PC-3 (cell line): ENCODE measurements at regions of chr19 and their contacts with region 1.

Region 1: GRCh38 chr19:5775668-5776309 is 8.8 kb downstream of the PRR22 start:
- DNase-seq: peak; percentile 93
- ATAC-seq: peak; percentile 37; the same call in 1 of the 2 replicates
- H3K4me3 ChIP-seq: no peak overlapping the region
- H3K27ac ChIP-seq: no peak overlapping the region
- H3K4me1 ChIP-seq: no peaks in the 10 kb centered on the region
- H3K27me3 ChIP-seq: no peaks in the 10 kb centered on the region
- CTCF ChIP-seq: no peak

Region 2: DNA sequence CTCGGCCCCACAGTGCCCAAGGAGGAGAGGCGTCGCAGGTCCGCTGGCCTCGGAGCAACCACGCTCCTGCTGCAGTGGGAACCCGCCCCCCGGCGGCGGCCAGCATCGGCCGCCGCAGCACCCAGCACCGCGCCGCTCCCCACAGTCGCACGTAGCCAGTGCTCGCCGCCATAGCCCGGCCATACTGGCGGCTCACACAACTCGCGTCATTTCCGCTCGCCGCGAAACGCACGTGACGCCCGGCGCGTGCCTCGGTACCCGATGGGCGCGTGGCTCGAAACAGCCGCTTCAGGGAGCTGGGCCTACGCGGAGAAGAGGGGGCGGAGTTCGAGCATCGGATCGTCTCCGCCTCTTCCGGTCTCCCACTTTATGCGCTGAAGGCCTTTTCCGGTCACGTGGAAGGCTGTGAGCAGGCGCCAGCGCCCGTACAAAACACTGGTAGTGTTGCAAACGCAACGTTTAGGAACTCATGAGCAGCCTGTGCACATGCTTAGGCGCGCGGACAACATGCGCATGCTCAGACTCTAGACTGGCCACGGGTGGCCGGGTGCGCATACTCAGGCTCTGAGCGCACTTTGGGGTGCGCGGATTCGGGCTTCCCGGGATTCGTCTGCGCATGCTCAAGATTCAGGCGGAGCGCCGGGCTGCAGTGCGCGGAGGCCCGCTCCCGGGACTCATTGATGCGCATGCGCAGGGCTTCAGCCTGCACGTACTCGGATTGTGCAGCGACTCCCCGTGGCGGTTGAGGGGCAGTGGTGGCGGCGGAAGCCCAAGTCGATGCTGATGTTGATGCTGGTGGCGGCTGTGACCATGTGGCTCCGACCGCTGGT is 55.6 kb before region 1 on chr19 and contains the starts of genes CATSPERD and LONP1:
- CTCF ChIA-PET with region 1: no interaction called
- POLR2A ChIA-PET with region 1: no interaction called
- intact Hi-C with region 1: loop called (anchors 2 kb)
- DNase-seq: peak; percentile 100
- ATAC-seq: peak; percentile 89
- H3K4me3 ChIP-seq: peak within 1 kb of the TSS; percentile 95
- H3K27ac ChIP-seq: peak within 1 kb of the TSS; percentile 93
- H3K4me1 ChIP-seq: peaks cover 18% of the 10 kb centered on the region
- H3K27me3 ChIP-seq: no peaks in the 10 kb centered on the region
- CTCF ChIP-seq: peak; percentile 92
- total RNA-seq, gene CATSPERD: not detected in 2 replicates
- total RNA-seq, gene LONP1: 217 and 306 TPM in 2 replicates

Region 3: DNA sequence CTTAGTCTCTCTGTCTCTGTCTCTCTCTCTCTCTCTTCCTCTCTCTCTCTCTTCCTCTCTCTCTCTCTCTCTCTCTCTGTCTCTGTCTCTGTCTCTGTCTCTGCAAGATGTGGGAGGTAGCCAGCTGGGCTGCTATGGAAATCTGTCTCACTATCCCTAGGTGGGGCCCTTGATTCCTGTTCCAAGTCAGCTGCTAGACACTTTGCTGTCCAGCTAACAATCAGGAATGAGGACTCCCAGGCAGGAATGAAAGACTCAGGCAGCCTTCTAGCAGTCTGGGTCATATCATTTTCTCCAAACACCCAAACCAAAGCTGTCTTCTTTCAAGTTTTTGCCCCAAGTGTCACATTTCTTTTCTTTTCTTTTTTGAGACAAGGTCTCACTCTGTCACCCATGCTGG is 32.2 kb before region 1 on chr19:
- CTCF ChIA-PET with region 1: no interaction called
- POLR2A ChIA-PET with region 1: no interaction called
- intact Hi-C with region 1: no loop called
- DNase-seq: no peak
- ATAC-seq: no peak
- H3K4me3 ChIP-seq: no peak overlapping the region
- H3K27ac ChIP-seq: no peak overlapping the region
- H3K4me1 ChIP-seq: no peaks in the 10 kb centered on the region
- H3K27me3 ChIP-seq: no peaks in the 10 kb centered on the region
- CTCF ChIP-seq: no peak

Region 4: DNA sequence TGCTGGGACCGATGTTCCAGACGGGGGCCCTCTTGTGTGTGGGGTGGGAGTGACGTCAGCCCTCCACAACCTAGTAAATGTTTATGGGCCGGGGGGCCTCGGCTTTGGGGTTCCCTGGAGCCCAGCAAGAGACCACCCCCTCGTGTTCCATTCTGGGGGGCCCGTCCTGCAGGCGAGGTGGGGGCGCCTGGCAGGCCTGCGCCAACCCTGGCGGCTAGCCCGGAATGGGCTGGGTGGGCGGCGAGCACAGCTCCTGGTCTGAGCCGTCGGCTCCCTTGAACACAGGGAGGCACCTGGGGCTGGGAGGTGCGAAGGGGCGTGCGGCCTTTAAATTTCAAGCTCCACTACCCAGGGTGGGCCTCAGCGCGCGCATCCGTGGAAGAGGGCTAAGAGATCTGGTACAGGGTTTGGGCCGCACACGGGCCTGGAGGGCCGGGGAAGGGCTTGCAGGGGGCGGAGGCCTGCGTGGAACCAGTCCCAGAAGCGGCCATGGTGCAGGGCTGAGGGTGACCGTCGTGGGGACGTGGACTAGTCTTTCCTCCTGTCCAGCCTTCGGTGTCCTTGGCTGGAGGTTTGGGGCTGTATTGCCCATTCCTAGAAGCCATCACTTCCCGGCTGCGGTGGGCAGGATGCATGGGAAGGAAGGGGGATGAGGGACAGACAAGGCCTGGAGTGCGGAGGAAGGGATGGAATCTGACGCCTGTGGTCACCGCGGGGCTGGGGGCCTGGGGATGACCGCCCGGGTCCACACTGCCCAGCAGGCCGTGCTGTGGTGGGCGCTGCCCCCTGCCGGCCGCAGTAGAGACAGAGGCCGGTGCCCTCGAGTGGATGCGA is 116.4 kb after region 1 on chr19:
- CTCF ChIA-PET with region 1: no interaction called
- POLR2A ChIA-PET with region 1: no interaction called
- intact Hi-C with region 1: loop called (anchors 1 kb)
- DNase-seq: peak; percentile 60
- ATAC-seq: peak; percentile 76
- H3K4me3 ChIP-seq: no peak overlapping the region
- H3K27ac ChIP-seq: no peak overlapping the region
- H3K4me1 ChIP-seq: no peaks in the 10 kb centered on the region
- H3K27me3 ChIP-seq: 0 out of 2 replicates have a peak, but pooled peaks cover 4% of the 10 kb centered on the region
- CTCF ChIP-seq: peak; percentile 96

Region 5: DNA sequence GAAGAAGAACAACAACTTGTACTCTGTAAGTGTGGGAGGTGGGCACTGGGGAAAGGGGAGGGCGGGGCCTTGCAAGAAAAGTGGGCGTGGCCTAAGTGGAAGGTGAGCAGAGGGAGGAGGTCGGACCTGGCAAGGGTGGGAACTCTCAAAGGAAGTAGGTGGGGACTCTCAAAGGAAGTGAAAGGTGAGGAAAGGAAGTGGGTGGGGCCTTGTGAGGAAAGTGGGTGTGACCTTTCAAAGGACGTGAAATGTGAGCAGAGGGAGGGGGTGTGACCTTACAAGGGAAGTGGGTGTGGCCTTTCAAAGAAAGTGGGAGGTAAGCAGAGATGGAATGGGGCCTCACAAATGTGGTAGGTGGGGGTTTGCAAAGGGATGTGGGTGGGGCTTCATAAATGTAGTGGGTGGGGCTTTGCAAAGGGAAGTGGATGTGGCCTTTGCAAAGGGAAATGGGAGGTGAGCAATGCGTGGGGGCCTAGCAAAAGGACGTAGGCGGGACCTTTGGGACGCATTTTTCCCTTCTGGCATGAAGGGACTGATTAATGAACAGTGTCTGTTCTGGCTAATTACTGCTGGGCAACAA is 385.6 kb after region 1 on chr19:
- CTCF ChIA-PET with region 1: no interaction called
- POLR2A ChIA-PET with region 1: interaction called, 10 read pairs
- intact Hi-C with region 1: no loop called
- DNase-seq: peak; percentile 82
- ATAC-seq: peak; percentile 50
- H3K4me3 ChIP-seq: no peak overlapping the region
- H3K27ac ChIP-seq: no peak overlapping the region
- H3K4me1 ChIP-seq: no peaks in the 10 kb centered on the region
- H3K27me3 ChIP-seq: no peaks in the 10 kb centered on the region
- CTCF ChIP-seq: no peak